ENCODE measurements at regions of chr16 and their contacts with region 1.

Region 1: GRCh38 chr16:24253192-24253591 is 2.9 kb upstream of the CACNG3 start:
- DNase-seq: peak; percentile 59
- ATAC-seq: peak; percentile 90
- H3K4me3 ChIP-seq: no peak overlapping the region
- H3K27ac ChIP-seq: no peak overlapping the region
- H3K4me1 ChIP-seq: no peaks in the 10 kb centered on the region
- H3K27me3 ChIP-seq: peaks cover 10% of the 10 kb centered on the region
- CTCF ChIP-seq: peak; percentile 86

Region 2: GRCh38 chr16:24041826-24042631 is 211.2 kb before region 1 on chr16:
- CTCF ChIA-PET with region 1: interaction called, 8 read pairs
- POLR2A ChIA-PET with region 1: no interaction called
- in situ Hi-C with region 1: no loop called
- intact Hi-C with region 1: loop called (anchors 2 kb)
- DNase-seq: peak; percentile 38
- ATAC-seq: peak; percentile 87
- H3K4me3 ChIP-seq: no peak overlapping the region
- H3K27ac ChIP-seq: no peak overlapping the region
- H3K4me1 ChIP-seq: no peaks in the 10 kb centered on the region; the same call in 1 of the 2 replicates
- H3K27me3 ChIP-seq: peaks cover 4% of the 10 kb centered on the region; the same call in 1 of the 2 replicates
- CTCF ChIP-seq: peak; percentile 94

Region 3: GRCh38 chr16:24070851-24071250 is 182.3 kb before region 1 on chr16:
- CTCF ChIA-PET with region 1: interaction called, 14 read pairs
- POLR2A ChIA-PET with region 1: no interaction called
- in situ Hi-C with region 1: no loop called
- intact Hi-C with region 1: loop called (anchors 10 kb)
- DNase-seq: peak; percentile 17
- ATAC-seq: peak; percentile 82
- H3K4me3 ChIP-seq: no peak overlapping the region
- H3K27ac ChIP-seq: no peak overlapping the region
- H3K4me1 ChIP-seq: no peaks in the 10 kb centered on the region
- H3K27me3 ChIP-seq: peaks cover 9% of the 10 kb centered on the region
- CTCF ChIP-seq: peak; percentile 84

Region 4: GRCh38 chr16:24130494-24131085 is 122.6 kb before region 1 on chr16:
- CTCF ChIA-PET with region 1: interaction called, 11 read pairs
- POLR2A ChIA-PET with region 1: no interaction called
- in situ Hi-C with region 1: no loop called
- intact Hi-C with region 1: no loop called
- DNase-seq: no peak
- ATAC-seq: no peak
- H3K4me3 ChIP-seq: no peak overlapping the region
- H3K27ac ChIP-seq: no peak overlapping the region
- H3K4me1 ChIP-seq: no peaks in the 10 kb centered on the region
- H3K27me3 ChIP-seq: peaks cover 10% of the 10 kb centered on the region
- CTCF ChIP-seq: no peak

Region 5: GRCh38 chr16:24396350-24397271 is 143.4 kb after region 1 on chr16:
- CTCF ChIA-PET with region 1: no interaction called
- POLR2A ChIA-PET with region 1: no interaction called
- in situ Hi-C with region 1: no loop called
- intact Hi-C with region 1: no loop called
- DNase-seq: no peak
- ATAC-seq: no peak
- H3K4me3 ChIP-seq: no peak overlapping the region
- H3K27ac ChIP-seq: no peak overlapping the region
- H3K4me1 ChIP-seq: no peaks in the 10 kb centered on the region
- H3K27me3 ChIP-seq: peaks cover 4% of the 10 kb centered on the region; the same call in 1 of the 2 replicates
- CTCF ChIP-seq: no peak

Region 6: GRCh38 chr16:24452724-24453123 is 199.5 kb after region 1 on chr16:
- CTCF ChIA-PET with region 1: no interaction called
- POLR2A ChIA-PET with region 1: no interaction called
- in situ Hi-C with region 1: no loop called
- intact Hi-C with region 1: no loop called
- DNase-seq: no peak
- ATAC-seq: no peak
- H3K4me3 ChIP-seq: no peak overlapping the region
- H3K27ac ChIP-seq: no peak overlapping the region
- H3K4me1 ChIP-seq: no peaks in the 10 kb centered on the region
- H3K27me3 ChIP-seq: no peaks in the 10 kb centered on the region
- CTCF ChIP-seq: no peak